ENCODE measurements at regions of chr3 and their contacts with region 1.

Region 1: GRCh38 chr3:32420126-32421038 is 28.7 kb downstream of the CMTM7 start:
- DNase-seq: no peak
- ATAC-seq: peak; percentile 47
- H3K4me3 Mint-ChIP-seq: peak overlapping the region; percentile 60
- H3K27ac Mint-ChIP-seq: peak overlapping the region; percentile 85
- H3K4me1 Mint-ChIP-seq: peaks cover 89% of the 10 kb centered on the region
- H3K27me3 Mint-ChIP-seq: no peaks in the 10 kb centered on the region

Region 2: DNA sequence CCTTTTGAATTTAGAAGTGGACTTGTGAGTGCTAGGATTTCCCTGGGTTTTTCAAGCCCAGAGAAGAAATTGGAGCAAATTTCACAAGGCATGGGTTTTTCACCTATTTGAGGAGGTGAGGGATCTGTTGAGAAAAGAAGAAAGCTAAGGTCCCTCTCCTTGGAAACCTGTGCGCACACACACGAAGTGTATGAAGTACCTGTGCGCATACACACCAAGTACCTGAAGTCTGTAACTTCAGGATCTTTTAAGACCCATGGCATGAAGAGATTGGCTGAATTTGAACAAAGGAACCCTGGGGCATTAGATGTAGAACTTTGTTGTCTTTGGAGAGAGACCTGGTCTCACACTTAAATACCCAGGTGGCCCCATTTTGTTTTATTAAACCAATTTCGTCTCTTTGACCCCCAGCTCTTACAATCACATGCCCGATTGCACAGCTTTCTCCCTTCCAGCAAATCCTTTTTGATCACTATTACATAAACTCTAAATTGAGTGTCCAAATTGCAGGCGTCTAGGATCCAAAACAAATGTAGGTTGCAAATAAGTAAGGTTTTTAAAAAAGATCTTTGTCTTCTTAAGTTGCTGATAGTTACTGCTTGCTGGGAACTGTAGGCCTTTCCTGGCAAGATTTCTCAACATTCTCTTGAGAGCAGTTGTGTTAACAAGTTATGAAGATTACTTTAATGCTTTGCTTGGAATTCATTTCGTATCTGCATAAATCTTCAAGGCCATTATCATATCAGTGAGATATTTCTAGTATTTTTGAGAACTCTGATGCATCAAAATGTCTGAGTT is 117.6 kb before region 1 on chr3:
- CTCF ChIA-PET with region 1: no interaction called
- POLR2A ChIA-PET with region 1: no interaction called
- DNase-seq: no peak
- ATAC-seq: no peak
- H3K4me3 Mint-ChIP-seq: peak overlapping the region; percentile 41
- H3K27ac Mint-ChIP-seq: peak overlapping the region; percentile 84
- H3K4me1 Mint-ChIP-seq: peaks cover 24% of the 10 kb centered on the region
- H3K27me3 Mint-ChIP-seq: no peaks in the 10 kb centered on the region

Region 3: GRCh38 chr3:32438596-32439344 is 18.4 kb after region 1 on chr3:
- CTCF ChIA-PET with region 1: interaction called, 36 read pairs
- POLR2A ChIA-PET with region 1: interaction called, 34 read pairs
- DNase-seq: peak; percentile 21
- ATAC-seq: peak; percentile 41
- H3K4me3 Mint-ChIP-seq: no peak overlapping the region
- H3K27ac Mint-ChIP-seq: peak overlapping the region; percentile 63
- H3K4me1 Mint-ChIP-seq: peaks cover 59% of the 10 kb centered on the region
- H3K27me3 Mint-ChIP-seq: no peaks in the 10 kb centered on the region

Region 4: GRCh38 chr3:32460031-32460749 is 39.8 kb after region 1 on chr3:
- CTCF ChIA-PET with region 1: interaction called, 21 read pairs
- POLR2A ChIA-PET with region 1: interaction called, 22 read pairs
- DNase-seq: peak; percentile 92
- ATAC-seq: peak; percentile 85
- H3K4me3 Mint-ChIP-seq: peak overlapping the region; percentile 80
- H3K27ac Mint-ChIP-seq: no peak overlapping the region
- H3K4me1 Mint-ChIP-seq: peaks cover 33% of the 10 kb centered on the region
- H3K27me3 Mint-ChIP-seq: no peaks in the 10 kb centered on the region